MCF 10A (cell line): ENCODE measurements at regions of chr5 and their contacts with region 1.

Region 1: GRCh38 chr5:96336351-96336985 is 96.6 kb downstream of the PCSK1 start:
- DNase-seq: peak; percentile 89
- H3K4me3 Mint-ChIP-seq: no peak overlapping the region
- H3K27ac Mint-ChIP-seq: no peak overlapping the region
- H3K4me1 Mint-ChIP-seq: peaks cover 21% of the 10 kb centered on the region
- H3K27me3 Mint-ChIP-seq: no peaks in the 10 kb centered on the region
- CTCF ChIP-seq: peak; percentile 84

Region 2: DNA sequence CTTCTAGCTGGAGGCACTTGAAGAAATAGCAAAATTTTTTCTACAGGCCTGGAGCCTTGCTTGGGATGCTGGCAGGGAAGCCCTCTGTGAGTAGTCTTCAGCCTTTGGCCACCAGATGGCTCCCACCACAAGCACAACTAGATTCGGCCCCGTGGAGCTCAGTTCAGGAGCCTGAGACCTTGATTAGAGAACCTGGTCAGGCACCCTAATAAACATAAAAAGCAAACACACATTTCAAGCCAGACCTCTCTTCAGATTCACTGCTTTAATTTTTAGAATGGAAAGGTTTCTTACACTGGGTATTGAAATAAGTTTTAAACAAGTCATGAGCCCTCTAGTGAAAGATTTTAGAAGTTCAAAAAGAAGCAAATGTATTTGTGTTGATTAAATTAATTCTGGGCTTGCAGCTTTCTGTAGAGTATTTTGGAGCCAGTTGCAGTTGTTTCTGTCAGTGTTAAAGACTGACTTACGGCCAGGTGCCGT is 555.3 kb before region 1 on chr5:
- CTCF ChIA-PET with region 1: interaction called, 17 read pairs
- POLR2A ChIA-PET with region 1: interaction called, 3 read pairs
- intact Hi-C with region 1: loop called (anchors 1 kb)
- DNase-seq: peak; percentile 85
- H3K4me3 Mint-ChIP-seq: no peak overlapping the region
- H3K27ac Mint-ChIP-seq: peak overlapping the region; percentile 64
- H3K4me1 Mint-ChIP-seq: no peaks in the 10 kb centered on the region
- H3K27me3 Mint-ChIP-seq: no peaks in the 10 kb centered on the region
- CTCF ChIP-seq: peak; percentile 89

Region 3: DNA sequence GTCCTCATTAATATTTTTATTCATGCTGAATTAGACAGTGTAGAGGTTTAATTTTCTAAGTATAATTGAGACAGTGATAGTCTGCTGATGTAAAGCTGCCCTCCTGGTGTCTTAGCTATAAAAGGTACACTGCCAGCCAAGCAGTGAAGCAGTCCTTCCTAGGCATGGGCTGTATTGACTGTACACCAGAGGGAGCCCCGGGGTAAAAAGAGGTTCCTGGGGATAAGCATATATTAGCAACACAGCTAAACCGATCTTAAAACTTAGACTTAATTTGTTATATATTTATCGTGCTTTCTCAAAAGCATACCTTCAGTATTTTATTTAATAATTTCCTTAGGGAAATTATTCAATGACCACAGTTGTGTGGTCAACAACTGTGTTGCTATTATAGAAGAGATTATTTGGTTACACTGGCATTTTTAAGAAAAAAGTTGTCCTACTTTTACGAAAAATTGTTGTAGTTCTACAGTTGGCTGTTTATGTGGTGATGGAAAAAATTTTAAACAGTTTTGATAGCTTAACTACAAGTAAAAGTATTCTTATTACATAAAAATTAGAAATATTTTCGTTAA is 443.6 kb before region 1 on chr5:
- CTCF ChIA-PET with region 1: interaction called, 29 read pairs
- POLR2A ChIA-PET with region 1: interaction called, 3 read pairs
- intact Hi-C with region 1: loop called (anchors 1 kb)
- DNase-seq: peak; percentile 60
- H3K4me3 Mint-ChIP-seq: no peak overlapping the region
- H3K27ac Mint-ChIP-seq: no peak overlapping the region
- H3K4me1 Mint-ChIP-seq: peaks cover 4% of the 10 kb centered on the region
- H3K27me3 Mint-ChIP-seq: no peaks in the 10 kb centered on the region
- CTCF ChIP-seq: peak; percentile 36

Region 4: DNA sequence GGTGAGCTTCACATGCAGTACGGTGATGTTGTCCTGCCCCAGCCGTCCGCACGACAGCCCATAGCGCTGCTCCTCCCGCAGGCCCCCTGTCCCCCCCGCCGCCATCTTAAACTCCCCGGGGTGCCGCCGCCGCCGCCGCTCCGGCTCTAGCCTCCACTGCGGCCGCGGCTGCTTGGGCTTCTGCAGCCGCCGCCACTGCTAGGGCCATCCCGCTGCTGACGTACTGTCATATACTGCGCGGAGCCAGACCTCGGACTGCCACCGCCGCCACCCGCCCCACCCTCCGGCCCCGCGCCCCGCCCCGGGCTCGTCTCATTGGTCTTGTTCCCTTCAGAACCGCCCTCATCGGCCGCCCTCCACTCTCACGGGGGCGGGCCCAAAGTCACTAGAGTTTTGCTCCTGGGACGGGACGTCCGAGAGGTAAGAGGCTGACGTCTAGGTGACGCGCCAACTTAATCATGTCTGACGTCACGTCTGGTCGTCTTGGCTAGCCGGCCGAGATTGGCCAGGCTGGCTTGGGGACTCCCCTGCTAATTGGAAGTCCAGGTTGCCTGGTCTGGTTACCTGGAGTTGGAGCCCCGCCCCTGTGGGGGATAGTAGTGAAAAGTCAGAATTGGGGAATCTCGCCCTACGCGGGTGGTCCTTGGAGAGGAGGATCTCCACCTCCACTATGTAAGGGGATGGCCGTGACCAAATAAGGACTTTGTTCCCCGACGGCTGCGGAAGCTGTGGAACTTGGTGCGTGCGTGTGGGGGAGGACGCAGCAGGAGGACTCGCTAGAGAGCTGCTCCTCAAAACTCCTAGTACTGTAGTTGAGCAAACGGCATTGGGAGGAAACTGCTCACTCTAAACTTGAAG is 374.6 kb before region 1 on chr5 and contains the start of gene ELL2:
- CTCF ChIA-PET with region 1: interaction called, 95 read pairs
- POLR2A ChIA-PET with region 1: interaction called, 28 read pairs
- intact Hi-C with region 1: loop called (anchors 1 kb)
- DNase-seq: peak; percentile 98
- H3K4me3 Mint-ChIP-seq: peak within 1 kb of the TSS; percentile 90
- H3K27ac Mint-ChIP-seq: peak within 1 kb of the TSS; percentile 91
- H3K4me1 Mint-ChIP-seq: peaks cover 28% of the 10 kb centered on the region
- H3K27me3 Mint-ChIP-seq: no peaks in the 10 kb centered on the region
- CTCF ChIP-seq: no peak
- total RNA-seq, gene ELL2: 144 and 147 TPM in 2 replicates

Region 5: DNA sequence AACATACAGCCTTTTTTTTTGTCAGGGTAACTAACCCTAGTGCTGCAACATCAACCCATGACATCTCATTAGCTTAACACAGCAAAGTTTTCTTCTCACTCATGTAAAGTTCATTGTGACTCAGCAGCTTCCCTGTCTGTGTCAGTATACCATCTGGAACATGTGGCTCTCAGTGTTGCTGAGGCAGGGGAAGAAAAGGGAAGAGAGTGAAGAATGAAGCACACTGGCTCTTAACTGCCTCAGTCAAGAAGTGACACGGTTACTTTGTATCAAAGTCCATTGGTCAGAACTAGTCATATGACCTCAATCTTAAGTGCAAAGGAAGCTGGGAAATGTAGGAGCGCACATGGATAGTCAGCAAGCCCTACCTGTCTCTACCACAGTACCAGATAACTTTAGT is 189.8 kb before region 1 on chr5:
- CTCF ChIA-PET with region 1: interaction called, 15 read pairs
- POLR2A ChIA-PET with region 1: interaction called, 7 read pairs
- intact Hi-C with region 1: loop called (anchors 5 kb)
- DNase-seq: peak; percentile 41
- H3K4me3 Mint-ChIP-seq: no peak overlapping the region
- H3K27ac Mint-ChIP-seq: no peak overlapping the region
- H3K4me1 Mint-ChIP-seq: peaks cover 27% of the 10 kb centered on the region
- H3K27me3 Mint-ChIP-seq: no peaks in the 10 kb centered on the region
- CTCF ChIP-seq: no peak

Region 6: GRCh38 chr5:96220610-96221390 is 115.7 kb before region 1 on chr5:
- CTCF ChIA-PET with region 1: interaction called, 5 read pairs
- POLR2A ChIA-PET with region 1: interaction called, 7 read pairs
- intact Hi-C with region 1: loop called (anchors 1 kb)
- DNase-seq: peak; percentile 53
- H3K4me3 Mint-ChIP-seq: no peak overlapping the region
- H3K27ac Mint-ChIP-seq: peak overlapping the region; percentile 87
- H3K4me1 Mint-ChIP-seq: peaks cover 16% of the 10 kb centered on the region
- H3K27me3 Mint-ChIP-seq: no peaks in the 10 kb centered on the region
- CTCF ChIP-seq: no peak

Region 7: GRCh38 chr5:96463106-96463505 is 126.6 kb after region 1 on chr5:
- CTCF ChIA-PET with region 1: no interaction called
- POLR2A ChIA-PET with region 1: no interaction called
- intact Hi-C with region 1: no loop called
- DNase-seq: peak; percentile 64
- H3K4me3 Mint-ChIP-seq: no peak overlapping the region
- H3K27ac Mint-ChIP-seq: no peak overlapping the region
- H3K4me1 Mint-ChIP-seq: peaks cover 6% of the 10 kb centered on the region
- H3K27me3 Mint-ChIP-seq: no peaks in the 10 kb centered on the region
- CTCF ChIP-seq: no peak

Region 8: GRCh38 chr5:96601811-96602244 is 265.4 kb after region 1 on chr5:
- CTCF ChIA-PET with region 1: interaction called, 492 read pairs
- POLR2A ChIA-PET with region 1: interaction called, 3 read pairs
- intact Hi-C with region 1: no loop called
- DNase-seq: peak; percentile 86
- H3K4me3 Mint-ChIP-seq: no peak overlapping the region
- H3K27ac Mint-ChIP-seq: no peak overlapping the region
- H3K4me1 Mint-ChIP-seq: peaks cover 6% of the 10 kb centered on the region
- H3K27me3 Mint-ChIP-seq: no peaks in the 10 kb centered on the region
- CTCF ChIP-seq: peak; percentile 65

Region 9: DNA sequence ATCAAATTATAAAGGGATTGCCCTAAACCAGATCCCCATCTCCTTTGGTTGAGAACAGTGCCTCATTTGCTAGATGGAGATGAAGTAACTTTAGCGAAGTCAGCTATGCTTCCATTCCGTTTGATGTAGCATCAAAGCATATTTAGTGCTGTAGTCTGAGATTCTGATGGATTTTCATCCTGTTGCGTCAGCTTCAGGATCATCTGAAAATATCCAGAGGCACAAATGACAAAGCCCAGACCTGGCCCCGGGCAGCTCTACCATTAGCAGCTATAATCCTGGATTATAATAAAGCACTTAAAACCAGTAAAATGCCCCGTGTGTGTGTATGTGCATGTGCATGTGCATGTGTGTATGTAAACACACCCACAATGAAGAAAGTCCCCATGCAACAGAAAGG is 426.6 kb after region 1 on chr5:
- CTCF ChIA-PET with region 1: no interaction called
- POLR2A ChIA-PET with region 1: no interaction called
- intact Hi-C with region 1: no loop called
- DNase-seq: no peak
- H3K4me3 Mint-ChIP-seq: no peak overlapping the region
- H3K27ac Mint-ChIP-seq: no peak overlapping the region
- H3K4me1 Mint-ChIP-seq: no peaks in the 10 kb centered on the region
- H3K27me3 Mint-ChIP-seq: no peaks in the 10 kb centered on the region
- CTCF ChIP-seq: no peak